A673 (cell line): ENCODE measurements at regions of chr4 and their contacts with region 1.

Region 1: DNA sequence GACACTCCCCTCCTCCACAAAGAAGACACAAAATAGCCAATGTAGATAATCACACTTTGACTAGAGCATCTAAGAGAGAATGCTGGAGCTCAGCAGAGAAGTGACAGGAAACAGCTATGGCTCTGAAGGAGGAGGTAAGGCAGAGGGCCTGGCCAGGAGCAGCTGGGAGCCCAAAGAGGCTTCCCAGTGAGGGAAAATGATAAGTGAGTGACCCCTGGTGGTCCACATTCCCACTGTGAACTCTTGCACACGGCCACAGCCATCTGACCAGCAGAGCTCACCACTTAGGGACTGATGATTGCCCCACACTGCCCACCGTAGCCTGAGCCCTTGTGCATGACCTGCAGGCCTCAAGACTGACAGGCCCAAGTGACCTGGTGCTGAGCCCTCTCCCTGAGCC is 162.7 kb upstream of the GALNTL6 start:
- DNase-seq: no peak
- H3K4me3 ChIP-seq: no peak overlapping the region
- H3K27ac ChIP-seq: no peak overlapping the region
- H3K4me1 ChIP-seq: no peaks in the 10 kb centered on the region
- H3K27me3 ChIP-seq: no peaks in the 10 kb centered on the region
- CTCF ChIP-seq: no peak

Region 2: GRCh38 chr4:171376724-171377395 is 273.7 kb before region 1 on chr4:
- CTCF ChIA-PET with region 1: no interaction called
- POLR2A ChIA-PET with region 1: interaction called, 19 read pairs
- intact Hi-C with region 1: no loop called
- DNase-seq: no peak
- H3K4me3 ChIP-seq: no peak overlapping the region
- H3K27ac ChIP-seq: no peak overlapping the region
- H3K4me1 ChIP-seq: no peaks in the 10 kb centered on the region
- H3K27me3 ChIP-seq: no peaks in the 10 kb centered on the region
- CTCF ChIP-seq: no peak